Sigmoid colon (tissue), 7 donors: ENCODE measurements at regions of chr10 and their contacts with region 1.

Region 1: GRCh38 chr10:28532383-28533175 is at the start of gene WAC:
- DNase-seq: peak; percentile 97
- H3K4me3 ChIP-seq: peak within 1 kb of the TSS; percentile 89 to 99 (median 99)
- H3K27ac ChIP-seq: peak within 1 kb of the TSS; percentile 91 to 99 (median 98)
- H3K4me1 ChIP-seq: peaks cover 0 to 52% (median 38%) of the 10 kb centered on the region in 4 donors
- H3K27me3 ChIP-seq: no peaks in the 10 kb centered on the region
- CTCF ChIP-seq: peak in 2 of 4 experiments; percentile 8 to 20
- EP300 ChIP-seq: no peak
- POLR2A ChIP-seq: peak; percentile 62 to 79
- total RNA-seq, gene WAC: 132 to 180 (median 142) TPM

Region 2: DNA sequence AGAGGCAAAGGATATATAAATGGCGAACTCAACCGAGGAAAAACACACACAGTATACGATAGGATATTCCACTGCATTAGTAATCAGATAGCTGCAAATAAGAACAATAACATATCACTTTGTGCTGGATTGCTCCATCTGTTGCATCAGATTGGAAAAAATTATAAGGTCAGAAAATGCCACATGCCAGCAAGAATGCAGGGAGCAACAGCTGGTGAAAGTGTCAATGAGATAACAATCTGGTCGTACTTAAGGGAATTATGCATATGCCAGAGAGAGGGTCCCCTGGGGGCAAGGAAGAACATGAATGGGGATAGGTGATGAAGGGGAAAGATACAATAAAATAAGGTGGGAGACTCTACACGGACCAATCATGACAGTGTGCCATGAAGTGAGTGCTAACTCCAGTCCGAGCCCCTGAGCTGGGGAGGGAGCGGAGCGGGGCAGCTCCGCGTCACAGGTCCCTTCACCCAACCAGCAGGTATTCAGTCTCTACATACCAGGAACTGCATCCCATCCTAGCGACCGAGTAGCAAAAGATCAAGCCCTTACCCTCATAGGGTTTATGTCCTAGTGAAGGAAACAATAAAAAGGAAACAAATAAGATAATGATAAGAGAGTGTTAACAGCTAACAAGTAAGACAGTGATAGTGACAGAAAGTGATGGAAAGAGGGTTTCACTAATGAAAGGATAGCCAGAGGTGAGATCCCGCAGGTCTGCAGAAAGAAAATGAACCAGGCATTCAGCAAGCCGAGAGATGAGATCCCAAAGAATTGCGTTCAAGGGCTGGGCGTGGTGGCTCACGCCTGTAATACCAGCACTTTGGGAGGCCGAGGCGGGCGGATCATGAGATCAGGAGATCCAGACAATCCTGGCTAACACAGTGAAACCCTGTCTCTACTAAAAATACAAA is 239.1 kb before region 1 on chr10:
- intact Hi-C with region 1: no loop called
- DNase-seq: no peak
- H3K4me3 ChIP-seq: no peak overlapping the region
- H3K27ac ChIP-seq: peak overlapping the region; percentile 68 to 75 (median 68)
- H3K4me1 ChIP-seq: peaks cover 0 to 59% (median 45%) of the 10 kb centered on the region in 4 donors
- H3K27me3 ChIP-seq: no peaks in the 10 kb centered on the region
- CTCF ChIP-seq: no peak
- EP300 ChIP-seq: no peak
- POLR2A ChIP-seq: no peak

Region 3: GRCh38 chr10:28432210-28432676 is 100.3 kb before region 1 on chr10:
- intact Hi-C with region 1: loop called (anchors 5 kb)
- DNase-seq: peak; percentile 77
- H3K4me3 ChIP-seq: no peak overlapping the region
- H3K27ac ChIP-seq: no peak overlapping the region
- H3K4me1 ChIP-seq: peaks cover 0 to 3% (median 2%) of the 10 kb centered on the region in 4 donors
- H3K27me3 ChIP-seq: no peaks in the 10 kb centered on the region
- CTCF ChIP-seq: peak in 3 of 4 experiments; percentile 67 to 83 (median 68)
- EP300 ChIP-seq: no peak
- POLR2A ChIP-seq: no peak

Region 4: GRCh38 chr10:28587970-28588290 is 55.4 kb after region 1 on chr10:
- intact Hi-C with region 1: loop called (anchors 5 kb)
- DNase-seq: no peak
- H3K4me3 ChIP-seq: no peak overlapping the region
- H3K27ac ChIP-seq: peak overlapping the region; percentile 36 to 62 (median 50)
- H3K4me1 ChIP-seq: peaks cover 0 to 48% (median 29%) of the 10 kb centered on the region in 4 donors
- H3K27me3 ChIP-seq: no peaks in the 10 kb centered on the region
- CTCF ChIP-seq: no peak
- EP300 ChIP-seq: no peak
- POLR2A ChIP-seq: no peak